IMR-90 (cell line): ENCODE measurements at regions of chr11 and their contacts with region 1.

Region 1: GRCh38 chr11:132126973-132127899 is 756.8 kb downstream of the NTM start:
- DNase-seq: peak; percentile 94
- ATAC-seq: peak; percentile 86
- H3K4me3 ChIP-seq: no peak overlapping the region
- H3K27ac ChIP-seq: peak overlapping the region; percentile 86
- H3K4me1 ChIP-seq: peaks cover 11% of the 10 kb centered on the region
- H3K27me3 ChIP-seq: no peaks in the 10 kb centered on the region
- CTCF ChIP-seq: peak; percentile 93
- POLR2A ChIP-seq: 0 out of 2 replicates have a peak, but pooled peaks have one; percentile 34
- RAD21 ChIP-seq: peak; percentile 93

Region 2: GRCh38 chr11:131748151-131749050 is 378.8 kb before region 1 on chr11:
- CTCF ChIA-PET with region 1: interaction called, 14 read pairs
- POLR2A ChIA-PET with region 1: no interaction called
- dilution Hi-C with region 1: no loop called
- in situ Hi-C with region 1: loop called (anchors 5 kb)
- intact Hi-C with region 1: loop called (anchors 1 kb)
- DNase-seq: peak; percentile 79
- ATAC-seq: peak; percentile 69
- H3K4me3 ChIP-seq: no peak overlapping the region
- H3K27ac ChIP-seq: no peak overlapping the region; the same call in 1 of the 2 replicates
- H3K4me1 ChIP-seq: peaks cover 17% of the 10 kb centered on the region
- H3K27me3 ChIP-seq: no peaks in the 10 kb centered on the region
- CTCF ChIP-seq: peak; percentile 88
- POLR2A ChIP-seq: no peak
- RAD21 ChIP-seq: peak; percentile 90

Region 3: GRCh38 chr11:131910523-131911387 is 216.5 kb before region 1 on chr11:
- CTCF ChIA-PET with region 1: interaction called, 28 read pairs
- POLR2A ChIA-PET with region 1: no interaction called
- dilution Hi-C with region 1: no loop called
- in situ Hi-C with region 1: loop called (anchors 5 kb)
- intact Hi-C with region 1: loop called (anchors 1 kb)
- DNase-seq: peak; percentile 43
- ATAC-seq: peak; percentile 60
- H3K4me3 ChIP-seq: peak overlapping the region; percentile 72
- H3K27ac ChIP-seq: peak overlapping the region; percentile 26
- H3K4me1 ChIP-seq: peaks cover 5% of the 10 kb centered on the region
- H3K27me3 ChIP-seq: no peaks in the 10 kb centered on the region
- CTCF ChIP-seq: no peak
- POLR2A ChIP-seq: no peak
- RAD21 ChIP-seq: no peak; the same call in 1 of the 2 replicates

Region 4: DNA sequence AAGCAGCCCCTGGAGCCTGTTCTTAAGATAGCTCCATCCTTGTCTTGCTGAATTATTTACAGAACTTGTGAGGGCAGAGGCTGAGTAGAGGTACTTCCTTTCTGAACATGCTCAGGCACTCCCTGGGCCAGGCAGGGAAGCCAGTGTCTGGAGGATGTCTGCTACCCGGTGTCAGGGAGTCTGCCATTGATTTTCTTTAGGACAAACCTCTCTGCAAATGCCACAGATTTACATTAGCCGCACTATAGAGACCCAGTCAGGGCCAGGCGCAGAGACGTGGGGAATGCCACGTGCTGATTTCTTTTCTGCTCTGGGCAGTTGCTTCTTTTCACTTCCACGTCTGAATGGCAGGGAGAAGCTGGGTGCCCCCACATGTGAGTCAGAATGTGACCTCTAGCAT is 171.3 kb before region 1 on chr11:
- CTCF ChIA-PET with region 1: no interaction called
- POLR2A ChIA-PET with region 1: no interaction called
- dilution Hi-C with region 1: no loop called
- in situ Hi-C with region 1: no loop called
- intact Hi-C with region 1: no loop called
- DNase-seq: no peak
- ATAC-seq: peak; percentile 60
- H3K4me3 ChIP-seq: no peak overlapping the region
- H3K27ac ChIP-seq: no peak overlapping the region
- H3K4me1 ChIP-seq: no peaks in the 10 kb centered on the region
- H3K27me3 ChIP-seq: no peaks in the 10 kb centered on the region
- CTCF ChIP-seq: no peak
- POLR2A ChIP-seq: no peak
- RAD21 ChIP-seq: no peak

Region 5: DNA sequence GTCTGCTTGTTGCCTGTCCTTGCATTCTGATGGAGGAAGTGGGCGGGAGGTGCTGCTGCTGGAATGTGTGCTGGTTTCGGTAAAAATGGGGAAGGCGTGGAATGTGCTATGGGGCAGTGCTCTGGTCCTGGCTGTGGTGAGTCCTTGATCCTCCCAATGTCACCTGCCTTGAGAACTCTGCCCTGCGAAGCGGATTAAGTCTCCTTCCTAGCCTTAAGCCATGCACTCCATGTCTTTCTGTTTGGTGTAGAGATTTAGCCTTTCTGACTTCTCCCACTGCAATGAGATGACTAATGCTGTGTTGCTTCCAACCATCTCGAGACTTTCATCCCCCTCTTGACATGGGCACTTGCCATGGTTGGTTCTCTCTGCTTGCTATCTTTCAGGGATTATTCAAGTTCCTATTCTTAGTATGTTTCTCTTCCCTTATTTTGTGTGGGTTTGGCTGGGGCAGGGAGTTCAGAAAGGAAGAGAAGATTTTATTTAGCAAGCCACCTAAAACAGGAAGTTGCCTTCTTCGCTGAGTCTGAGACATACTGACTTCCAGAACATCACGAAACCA is 68.9 kb before region 1 on chr11:
- CTCF ChIA-PET with region 1: interaction called, 14 read pairs
- POLR2A ChIA-PET with region 1: no interaction called
- dilution Hi-C with region 1: no loop called
- in situ Hi-C with region 1: no loop called
- intact Hi-C with region 1: loop called (anchors 5 kb)
- DNase-seq: peak; percentile 61
- ATAC-seq: no peak; the same call in 1 of the 2 replicates
- H3K4me3 ChIP-seq: no peak overlapping the region
- H3K27ac ChIP-seq: peak overlapping the region; percentile 54
- H3K4me1 ChIP-seq: peaks cover 40% of the 10 kb centered on the region
- H3K27me3 ChIP-seq: no peaks in the 10 kb centered on the region
- CTCF ChIP-seq: no peak
- POLR2A ChIP-seq: no peak
- RAD21 ChIP-seq: no peak

Region 6: DNA sequence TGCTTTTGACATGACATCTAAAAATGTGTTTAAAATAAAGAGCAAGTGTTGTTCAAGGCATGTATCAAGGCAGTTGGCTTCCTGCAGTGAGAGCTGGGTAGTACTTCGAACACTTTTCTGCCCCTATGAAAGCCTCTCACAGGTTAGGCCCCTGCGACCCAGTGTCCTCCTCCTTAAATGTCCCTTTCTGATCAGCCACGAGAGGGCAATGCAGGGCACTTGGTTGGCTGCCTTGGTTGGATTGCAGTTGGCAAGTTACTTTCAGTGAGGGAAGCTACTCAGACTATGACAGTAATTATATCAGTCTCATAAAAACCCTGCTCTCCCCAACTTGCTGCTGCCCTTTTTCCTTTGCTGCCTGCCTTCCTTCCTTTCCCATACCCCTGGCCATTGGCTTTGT is 13.1 kb before region 1 on chr11:
- CTCF ChIA-PET with region 1: interaction called, 10 read pairs
- POLR2A ChIA-PET with region 1: no interaction called
- dilution Hi-C with region 1: no loop called
- in situ Hi-C with region 1: no loop called
- intact Hi-C with region 1: no loop called
- DNase-seq: peak; percentile 25
- ATAC-seq: no peak
- H3K4me3 ChIP-seq: no peak overlapping the region
- H3K27ac ChIP-seq: no peak overlapping the region
- H3K4me1 ChIP-seq: peaks cover 7% of the 10 kb centered on the region
- H3K27me3 ChIP-seq: no peaks in the 10 kb centered on the region
- CTCF ChIP-seq: peak; percentile 29; the same call in 1 of the 2 replicates
- POLR2A ChIP-seq: no peak
- RAD21 ChIP-seq: peak; percentile 28; the same call in 1 of the 2 replicates

Region 7: GRCh38 chr11:132395434-132395833 is 268.2 kb after region 1 on chr11:
- CTCF ChIA-PET with region 1: no interaction called
- POLR2A ChIA-PET with region 1: no interaction called
- dilution Hi-C with region 1: no loop called
- in situ Hi-C with region 1: no loop called
- intact Hi-C with region 1: no loop called
- DNase-seq: no peak
- ATAC-seq: no peak
- H3K4me3 ChIP-seq: no peak overlapping the region
- H3K27ac ChIP-seq: no peak overlapping the region
- H3K4me1 ChIP-seq: no peaks in the 10 kb centered on the region
- H3K27me3 ChIP-seq: no peaks in the 10 kb centered on the region
- CTCF ChIP-seq: no peak
- POLR2A ChIP-seq: no peak
- RAD21 ChIP-seq: no peak

Region 8: GRCh38 chr11:133064152-133064877 is 937.1 kb after region 1 on chr11:
- CTCF ChIA-PET with region 1: no interaction called
- POLR2A ChIA-PET with region 1: no interaction called
- dilution Hi-C with region 1: no loop called
- in situ Hi-C with region 1: no loop called
- intact Hi-C with region 1: loop called (anchors 10 kb)
- DNase-seq: peak; percentile 48
- ATAC-seq: peak; percentile 92
- H3K4me3 ChIP-seq: peak overlapping the region; percentile 44
- H3K27ac ChIP-seq: no peak overlapping the region
- H3K4me1 ChIP-seq: no peaks in the 10 kb centered on the region
- H3K27me3 ChIP-seq: no peaks in the 10 kb centered on the region
- CTCF ChIP-seq: peak; percentile 63
- POLR2A ChIP-seq: no peak
- RAD21 ChIP-seq: peak; percentile 76